ENCODE measurements at regions of chr9 and their contacts with region 1.

Region 1: GRCh38 chr9:132354637-132355355 is at the start of gene SETX:
- DNase-seq: peak; percentile 91
- H3K4me3 Mint-ChIP-seq: peak within 1 kb of the TSS; percentile 91
- H3K27ac Mint-ChIP-seq: peak within 1 kb of the TSS; percentile 95
- H3K4me1 Mint-ChIP-seq: peaks cover 46% of the 10 kb centered on the region
- H3K27me3 Mint-ChIP-seq: peaks cover 3% of the 10 kb centered on the region
- total RNA-seq, gene SETX: 47.4 and 49.6 TPM in 2 replicates

Region 2: DNA sequence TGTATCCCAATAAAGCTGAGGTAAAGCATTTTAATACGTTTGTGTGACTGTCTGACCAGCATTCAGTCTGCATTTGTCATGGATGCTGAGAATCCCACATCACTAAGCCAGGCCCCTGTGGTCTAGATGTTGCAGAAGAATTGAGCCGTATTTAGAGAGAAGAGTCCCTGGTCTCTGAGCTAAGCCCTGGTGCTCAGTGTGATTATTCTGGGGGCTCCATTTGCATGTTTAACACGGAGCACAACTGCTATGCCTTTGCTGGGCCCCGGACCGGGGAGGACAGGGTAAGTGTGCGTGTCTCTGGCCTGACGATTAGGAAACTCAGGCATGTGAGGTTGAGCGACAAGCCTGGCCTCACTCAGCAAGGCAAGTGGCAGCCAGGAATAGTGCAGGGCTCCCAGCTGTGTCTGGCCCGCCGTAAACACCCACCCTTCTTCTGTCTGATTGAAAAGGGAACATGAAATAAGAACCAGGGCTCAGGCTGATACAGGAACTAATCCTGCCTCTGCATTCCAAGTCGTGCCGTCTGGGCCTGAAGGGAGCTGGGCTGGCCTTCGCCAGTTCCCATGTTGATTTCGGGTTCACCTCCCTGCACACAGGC is 1100.8 kb before region 1 on chr9:
- intact Hi-C with region 1: loop called (anchors 5 kb)
- DNase-seq: no peak
- H3K4me3 Mint-ChIP-seq: no peak overlapping the region
- H3K27ac Mint-ChIP-seq: peak overlapping the region; percentile 29
- H3K4me1 Mint-ChIP-seq: peaks cover 46% of the 10 kb centered on the region
- H3K27me3 Mint-ChIP-seq: no peaks in the 10 kb centered on the region

Region 3: DNA sequence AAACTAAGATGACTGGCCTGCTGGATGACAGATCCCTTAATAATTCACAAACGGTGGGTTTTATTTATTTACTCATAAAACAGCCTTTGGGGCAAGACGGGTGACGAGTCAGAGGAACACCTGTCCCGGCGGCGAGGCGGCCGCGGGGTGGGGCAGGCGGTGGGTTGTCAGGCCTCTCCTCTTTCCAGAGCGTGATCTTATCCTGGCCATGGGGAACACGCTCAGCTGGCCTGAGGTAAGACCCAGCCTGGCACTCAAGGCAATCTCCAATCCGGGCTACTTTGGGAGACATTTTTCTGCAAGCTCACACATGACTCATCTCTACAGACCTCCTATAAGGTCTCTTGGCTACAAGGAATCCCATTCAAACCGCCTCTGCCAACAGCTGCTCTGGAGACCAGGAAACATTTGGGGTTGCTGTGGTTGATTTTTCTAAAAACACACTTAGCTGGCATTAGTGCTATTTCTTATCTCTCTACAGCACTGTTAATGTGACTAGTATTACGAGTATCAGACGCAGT is 621.2 kb before region 1 on chr9:
- intact Hi-C with region 1: loop called (anchors 5 kb)
- DNase-seq: no peak
- H3K4me3 Mint-ChIP-seq: peak overlapping the region; percentile 73
- H3K27ac Mint-ChIP-seq: peak overlapping the region; percentile 96
- H3K4me1 Mint-ChIP-seq: peaks cover 84% of the 10 kb centered on the region
- H3K27me3 Mint-ChIP-seq: no peaks in the 10 kb centered on the region

Region 4: DNA sequence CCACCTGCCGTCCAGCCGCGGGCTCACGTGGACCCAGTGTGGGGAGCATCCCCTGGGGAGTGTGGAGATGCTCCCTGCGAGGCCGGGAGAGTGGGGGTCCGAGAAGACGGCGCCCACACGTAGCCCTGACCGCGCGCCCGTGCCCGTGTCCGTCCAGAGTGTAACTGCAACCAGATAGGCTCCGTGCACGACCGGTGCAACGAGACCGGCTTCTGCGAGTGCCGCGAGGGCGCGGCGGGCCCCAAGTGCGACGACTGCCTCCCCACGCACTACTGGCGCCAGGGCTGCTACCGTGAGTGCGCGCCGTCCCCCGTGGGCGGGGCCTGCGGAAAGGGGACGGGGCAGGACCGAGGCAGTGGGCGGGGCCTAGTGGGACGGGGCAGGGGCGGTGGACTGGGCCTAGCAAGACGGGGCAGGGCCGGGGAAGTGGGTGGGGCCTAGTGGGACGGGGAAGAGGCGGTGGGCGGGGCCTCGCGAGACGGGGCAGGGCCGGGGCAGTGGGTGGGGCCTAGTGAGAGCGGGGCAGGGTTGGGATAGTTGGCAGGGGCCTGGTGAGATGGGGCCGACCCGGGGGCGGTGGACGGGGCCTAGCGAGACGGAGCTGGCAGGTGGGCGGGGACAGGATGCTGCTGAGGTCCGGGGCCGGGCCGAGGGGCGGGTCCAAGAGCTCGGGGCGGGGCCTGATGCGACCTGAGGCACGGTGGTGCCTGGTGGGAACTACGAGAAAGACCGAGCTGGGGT is 113.9 kb before region 1 on chr9:
- intact Hi-C with region 1: loop called (anchors 1 kb)
- DNase-seq: peak; percentile 98
- H3K4me3 Mint-ChIP-seq: peak overlapping the region; percentile 94
- H3K27ac Mint-ChIP-seq: peak overlapping the region; percentile 78
- H3K4me1 Mint-ChIP-seq: peaks cover 15% of the 10 kb centered on the region
- H3K27me3 Mint-ChIP-seq: peaks cover 8% of the 10 kb centered on the region

Region 5: GRCh38 chr9:132669698-132670456 is 315.1 kb after region 1 on chr9 and contains the start of gene DDX31:
- intact Hi-C with region 1: loop called (anchors 5 kb)
- DNase-seq: peak; percentile 84
- H3K4me3 Mint-ChIP-seq: peak within 1 kb of the TSS; percentile 96
- H3K27ac Mint-ChIP-seq: peak within 1 kb of the TSS; percentile 90
- H3K4me1 Mint-ChIP-seq: peaks cover 38% of the 10 kb centered on the region
- H3K27me3 Mint-ChIP-seq: no peaks in the 10 kb centered on the region
- total RNA-seq, gene DDX31: 32.1 and 34.1 TPM in 2 replicates

Region 6: DNA sequence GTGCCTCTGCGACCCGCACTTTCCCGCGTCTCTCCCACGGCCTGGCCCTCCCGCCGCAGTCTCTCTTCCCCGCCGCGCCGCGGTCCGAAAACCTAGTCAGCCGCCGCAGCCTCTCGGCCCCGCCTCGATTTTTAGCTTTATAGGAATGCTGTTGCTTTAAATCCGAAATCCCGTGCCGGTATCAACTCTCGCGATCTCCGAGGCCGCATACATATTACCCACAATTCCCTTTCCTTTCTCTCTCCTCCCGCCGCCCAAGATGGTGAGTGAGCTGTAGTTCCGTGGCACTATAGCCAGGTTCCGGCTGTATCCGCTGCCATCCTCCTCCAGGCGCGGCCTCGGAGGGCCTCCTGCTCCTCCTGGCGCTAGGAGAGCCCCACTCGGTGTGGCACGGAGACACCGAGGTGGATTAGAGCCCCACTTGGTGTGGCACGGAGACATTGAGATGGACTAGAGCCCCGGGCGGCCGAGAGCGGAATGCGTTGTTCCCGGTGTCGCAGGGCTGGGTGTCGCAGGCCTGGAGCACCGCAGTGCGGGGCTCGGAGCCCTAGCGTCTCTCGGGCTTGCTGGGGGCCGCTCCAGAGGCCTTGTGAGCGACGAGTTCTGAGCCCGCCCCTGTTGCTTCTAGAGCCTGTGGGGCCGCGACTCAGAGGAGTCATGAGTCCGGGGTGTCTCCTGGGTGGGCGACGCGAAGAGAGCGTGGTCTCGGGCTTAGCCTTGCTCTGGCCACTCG is 993.4 kb after region 1 on chr9 and contains the starts of genes MED22 and RPL7A:
- intact Hi-C with region 1: loop called (anchors 10 kb)
- DNase-seq: peak; percentile 90
- H3K4me3 Mint-ChIP-seq: peak within 1 kb of the TSS; percentile 93
- H3K27ac Mint-ChIP-seq: peak within 1 kb of the TSS; percentile 99
- H3K4me1 Mint-ChIP-seq: peaks cover 36% of the 10 kb centered on the region
- H3K27me3 Mint-ChIP-seq: peaks cover 2% of the 10 kb centered on the region
- total RNA-seq, gene MED22: 37.9 and 40.5 TPM in 2 replicates
- total RNA-seq, gene RPL7A: 2,401 and 2,463 TPM in 2 replicates

Measured in activated T-helper 1 cell treated with anti-CD3 and anti-CD28 coated beads, Interleukin-12 subunit alpha, Interleukin-12 subunit beta, Interleukin-2, Interleukin-4 antibody, amounts not matched to agents 30 ng/mL and 10 ng/mL and 1 ng/mL, durations not matched to agents 14 hours and 24 hours and 36 hours (primary cell).